Activated CD4-positive, alpha-beta T cell treated with anti-CD3 and anti-CD28 coated beads for 36 hours (primary cell): ENCODE measurements at regions of chr20 and their contacts with region 1.

Region 1: DNA sequence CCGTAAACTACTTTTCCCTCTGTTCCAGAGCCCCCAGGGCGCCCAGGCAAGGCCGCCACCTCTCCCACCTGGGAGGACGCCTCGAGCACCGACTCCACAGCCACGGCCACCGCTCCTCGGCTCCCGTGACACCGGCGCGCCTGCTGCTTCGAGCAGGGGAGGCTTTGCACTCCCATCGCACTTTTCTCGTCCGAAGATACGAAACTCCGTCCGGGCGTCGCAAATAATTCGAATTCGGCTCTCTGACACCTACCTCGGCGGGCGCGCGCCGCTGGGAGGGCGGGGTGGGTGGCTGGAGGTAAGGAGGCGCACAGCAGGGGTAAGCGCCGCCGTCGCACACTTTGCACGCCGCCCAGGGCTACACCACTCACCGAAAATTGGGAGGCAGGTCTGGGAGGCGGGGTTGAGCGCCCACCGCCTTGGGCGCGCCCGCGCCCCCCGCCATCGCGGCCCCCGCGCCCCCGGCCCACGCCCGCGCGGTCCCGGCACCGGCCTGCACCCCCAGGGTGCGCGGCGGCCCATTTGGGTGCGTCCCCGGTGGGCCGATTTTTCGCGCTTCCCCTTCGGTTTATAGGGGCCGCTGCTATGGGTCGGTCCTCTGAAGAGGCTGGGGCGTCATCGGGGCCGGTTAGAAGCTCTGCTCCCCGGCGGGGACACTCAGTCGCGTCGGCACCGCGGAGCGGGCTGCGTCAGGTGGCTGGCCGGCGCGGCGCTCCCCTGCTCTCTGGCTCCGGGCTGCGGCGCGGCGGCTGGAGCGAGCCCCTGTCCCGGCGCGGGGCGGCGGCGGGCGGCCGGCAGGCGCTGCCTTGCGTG is 36.2 kb downstream of the GNAS start:
- DNase-seq: peak; percentile 91
- ATAC-seq: peak; percentile 58
- H3K4me3 Mint-ChIP-seq: peak overlapping the region; percentile 88
- H3K27ac Mint-ChIP-seq: peak overlapping the region; percentile 47
- H3K4me1 Mint-ChIP-seq: peaks cover 29% of the 10 kb centered on the region
- H3K27me3 Mint-ChIP-seq: no peaks in the 10 kb centered on the region

Region 2: DNA sequence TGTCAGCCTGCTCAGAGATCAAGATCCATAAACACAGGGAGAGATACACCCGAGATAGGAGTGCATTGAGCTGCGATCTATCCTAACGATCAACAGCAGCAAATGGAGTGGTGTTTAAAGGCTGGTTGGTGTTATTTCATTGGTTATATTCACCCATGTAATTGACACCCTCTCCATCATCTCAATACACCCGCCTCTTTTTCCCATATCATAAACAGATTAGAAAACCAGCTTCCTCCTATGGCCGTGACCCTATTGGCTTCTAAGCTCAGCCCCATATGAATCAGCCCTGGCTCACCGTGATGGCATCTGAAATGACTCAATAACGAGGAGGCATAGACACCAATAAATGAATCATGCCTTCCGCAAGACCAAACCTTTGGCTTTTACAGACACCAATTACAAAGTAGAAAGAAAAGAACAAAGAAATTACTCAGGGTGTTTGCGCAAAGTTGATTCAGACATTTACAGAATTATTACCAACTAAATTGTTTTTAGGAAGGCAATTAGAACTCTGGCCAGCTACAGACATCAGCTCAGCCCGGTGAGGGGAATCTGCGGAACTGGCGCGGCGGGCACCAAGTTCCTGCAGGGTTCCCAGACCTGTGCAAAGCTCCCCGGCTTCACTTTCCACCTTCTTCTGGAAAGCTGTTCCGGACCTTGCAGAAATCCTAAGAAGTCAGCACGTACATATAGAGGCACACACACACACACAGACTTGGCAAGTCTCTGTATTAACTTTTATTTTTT is 1190.4 kb before region 1 on chr20:
- CTCF ChIA-PET with region 1: no interaction called
- POLR2A ChIA-PET with region 1: no interaction called
- intact Hi-C with region 1: loop called in 1 of 2 experiments (anchors 2 kb)
- DNase-seq: peak; percentile 89
- ATAC-seq: peak; percentile 99
- H3K4me3 Mint-ChIP-seq: peak overlapping the region; percentile 33
- H3K27ac Mint-ChIP-seq: peak overlapping the region; percentile 77
- H3K4me1 Mint-ChIP-seq: peaks cover 40% of the 10 kb centered on the region
- H3K27me3 Mint-ChIP-seq: no peaks in the 10 kb centered on the region

Region 3: GRCh38 chr20:58907399-58908137 is 18.8 kb after region 1 on chr20:
- CTCF ChIA-PET with region 1: no interaction called
- POLR2A ChIA-PET with region 1: no interaction called
- intact Hi-C with region 1: loop called in 1 of 2 experiments (anchors 1 kb)
- DNase-seq: peak; percentile 70
- ATAC-seq: peak; percentile 77
- H3K4me3 Mint-ChIP-seq: peak overlapping the region; percentile 48
- H3K27ac Mint-ChIP-seq: peak overlapping the region; percentile 92
- H3K4me1 Mint-ChIP-seq: peaks cover 49% of the 10 kb centered on the region
- H3K27me3 Mint-ChIP-seq: no peaks in the 10 kb centered on the region

Region 4: DNA sequence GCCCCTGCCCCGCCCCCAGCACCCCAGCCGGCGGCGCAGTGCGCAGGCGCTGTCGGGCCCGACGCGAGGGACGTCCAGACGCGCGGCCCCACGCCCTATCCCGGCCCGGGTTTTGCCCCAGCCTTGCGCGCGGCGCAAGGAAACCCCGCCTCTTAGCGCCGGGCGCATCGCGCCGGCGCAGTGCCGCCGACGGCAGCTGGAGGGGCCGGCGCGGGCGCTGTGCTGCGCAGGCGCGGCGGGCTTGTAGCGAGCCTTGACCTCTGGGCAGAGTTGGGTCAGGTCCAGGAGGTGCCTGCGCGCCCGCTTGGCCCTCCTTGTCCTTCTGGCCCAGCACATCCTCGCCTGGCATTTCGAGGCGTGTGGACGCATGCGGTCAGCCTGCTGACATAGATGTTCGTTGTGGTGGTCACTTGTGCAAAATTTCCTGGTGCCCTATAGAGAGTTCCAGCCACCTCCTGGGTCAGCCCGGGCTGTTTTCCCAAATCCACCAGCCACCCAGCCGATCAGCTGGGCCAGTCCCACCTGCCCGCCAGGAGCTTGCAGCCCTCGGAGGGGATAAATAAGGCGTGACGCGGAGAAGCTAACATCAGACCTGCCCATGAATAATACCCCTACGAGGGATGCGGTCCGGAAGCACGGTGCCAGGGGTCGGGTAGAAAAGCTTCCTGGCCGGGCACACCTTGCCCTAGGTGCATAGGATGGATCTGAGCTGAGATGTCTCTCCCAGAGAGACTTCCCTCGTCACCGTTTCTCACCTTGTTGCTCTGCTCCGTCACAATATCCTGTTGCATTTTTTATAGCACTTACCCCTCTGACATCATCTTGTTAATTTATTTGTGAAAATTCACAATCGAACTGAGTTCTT is 154.3 kb after region 1 on chr20:
- CTCF ChIA-PET with region 1: interaction called, 4 read pairs
- POLR2A ChIA-PET with region 1: no interaction called
- intact Hi-C with region 1: loop called in 1 of 2 experiments (anchors 2 kb)
- DNase-seq: peak; percentile 97
- ATAC-seq: peak; percentile 97
- H3K4me3 Mint-ChIP-seq: peak overlapping the region; percentile 90
- H3K27ac Mint-ChIP-seq: peak overlapping the region; percentile 89
- H3K4me1 Mint-ChIP-seq: peaks cover 48% of the 10 kb centered on the region
- H3K27me3 Mint-ChIP-seq: no peaks in the 10 kb centered on the region

Region 5: DNA sequence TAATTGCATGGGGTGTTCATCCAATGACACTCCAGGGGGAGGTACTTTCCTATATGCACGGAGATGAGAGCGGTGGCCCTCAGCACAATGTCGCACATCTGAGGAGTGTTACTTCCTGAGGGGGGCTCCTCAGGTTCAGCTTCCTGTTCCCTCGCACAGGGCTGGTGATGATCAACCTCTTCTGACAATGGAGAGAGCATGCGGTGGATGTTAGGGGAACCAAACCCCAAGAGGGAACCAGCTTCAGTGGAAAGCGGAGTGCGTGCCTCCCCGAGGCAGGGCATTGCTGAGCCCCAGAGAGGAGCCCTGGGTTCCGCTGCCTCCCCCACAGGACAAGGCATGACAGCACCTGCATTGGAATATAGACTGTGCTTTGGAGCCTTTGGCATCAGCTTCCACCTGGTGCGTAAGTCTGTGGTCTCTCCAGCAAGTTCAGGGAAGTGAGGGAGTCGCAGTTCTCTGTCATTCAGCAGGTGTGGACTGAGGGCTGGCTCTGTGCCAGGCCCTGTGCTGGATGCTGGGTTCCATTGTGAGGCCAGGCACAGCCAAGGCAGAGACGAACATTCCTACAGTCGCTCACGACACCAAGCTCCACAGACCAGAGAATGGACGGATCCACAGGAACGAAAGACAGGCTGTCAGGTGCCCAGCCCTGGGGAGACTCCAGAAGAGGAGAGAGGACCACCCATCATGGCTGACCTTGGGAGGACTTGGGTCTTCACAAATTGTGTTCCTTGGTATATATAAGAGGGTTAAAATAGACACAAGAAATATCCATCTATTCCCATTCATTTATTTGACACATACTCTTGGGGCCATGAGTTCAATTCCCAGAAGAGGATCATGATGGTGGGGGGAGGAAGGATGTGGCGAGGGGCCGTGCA is 271.0 kb after region 1 on chr20:
- CTCF ChIA-PET with region 1: no interaction called
- POLR2A ChIA-PET with region 1: no interaction called
- intact Hi-C with region 1: loop called (anchors 2 to 5 kb)
- DNase-seq: peak; percentile 75
- ATAC-seq: peak; percentile 83
- H3K4me3 Mint-ChIP-seq: peak overlapping the region; percentile 80
- H3K27ac Mint-ChIP-seq: peak overlapping the region; percentile 97
- H3K4me1 Mint-ChIP-seq: peaks cover 82% of the 10 kb centered on the region
- H3K27me3 Mint-ChIP-seq: no peaks in the 10 kb centered on the region

Region 6: DNA sequence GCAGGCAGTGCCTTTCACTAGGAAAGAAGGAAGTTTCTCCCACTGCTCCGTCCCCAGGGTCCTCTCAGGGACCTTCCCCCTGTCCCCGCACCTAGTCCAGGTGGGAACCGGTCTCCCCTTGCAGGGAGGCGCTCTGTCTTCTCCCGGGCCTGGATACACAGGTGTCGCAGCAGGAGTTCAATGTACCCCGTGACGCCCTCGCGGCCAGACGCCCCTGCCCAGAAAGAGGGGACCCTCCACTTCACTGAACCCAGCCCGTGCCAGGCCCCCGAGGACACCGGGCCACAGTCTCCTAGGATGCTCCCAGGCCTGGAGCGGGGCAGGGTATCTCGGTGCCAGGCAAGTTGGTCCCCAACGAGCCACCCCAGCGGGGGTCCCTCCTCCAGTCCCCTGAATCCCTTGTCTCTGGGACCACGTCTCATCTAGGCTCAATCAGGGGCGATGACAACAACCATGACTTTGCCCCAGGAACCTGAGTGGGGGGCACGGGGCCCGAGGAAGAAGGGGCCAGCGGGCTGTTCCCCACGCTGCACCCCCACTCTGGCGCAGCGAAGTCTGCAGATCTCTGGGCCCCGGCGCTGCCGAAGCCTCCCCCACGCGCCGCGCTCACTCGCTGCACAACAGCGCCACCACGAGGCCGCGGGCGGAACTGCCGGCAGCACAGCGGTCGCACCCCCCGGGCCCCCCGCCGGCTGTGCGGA is 514.7 kb after region 1 on chr20:
- CTCF ChIA-PET with region 1: interaction called, 3 read pairs
- POLR2A ChIA-PET with region 1: no interaction called
- intact Hi-C with region 1: loop called in 1 of 2 experiments (anchors 2 kb)
- DNase-seq: peak; percentile 89
- ATAC-seq: peak; percentile 72
- H3K4me3 Mint-ChIP-seq: no peak overlapping the region
- H3K27ac Mint-ChIP-seq: peak overlapping the region; percentile 71
- H3K4me1 Mint-ChIP-seq: no peaks in the 10 kb centered on the region
- H3K27me3 Mint-ChIP-seq: peaks cover 2% of the 10 kb centered on the region